AG04450 (cell line): ENCODE measurements at regions of chr14 and their contacts with region 1.

Region 1: DNA sequence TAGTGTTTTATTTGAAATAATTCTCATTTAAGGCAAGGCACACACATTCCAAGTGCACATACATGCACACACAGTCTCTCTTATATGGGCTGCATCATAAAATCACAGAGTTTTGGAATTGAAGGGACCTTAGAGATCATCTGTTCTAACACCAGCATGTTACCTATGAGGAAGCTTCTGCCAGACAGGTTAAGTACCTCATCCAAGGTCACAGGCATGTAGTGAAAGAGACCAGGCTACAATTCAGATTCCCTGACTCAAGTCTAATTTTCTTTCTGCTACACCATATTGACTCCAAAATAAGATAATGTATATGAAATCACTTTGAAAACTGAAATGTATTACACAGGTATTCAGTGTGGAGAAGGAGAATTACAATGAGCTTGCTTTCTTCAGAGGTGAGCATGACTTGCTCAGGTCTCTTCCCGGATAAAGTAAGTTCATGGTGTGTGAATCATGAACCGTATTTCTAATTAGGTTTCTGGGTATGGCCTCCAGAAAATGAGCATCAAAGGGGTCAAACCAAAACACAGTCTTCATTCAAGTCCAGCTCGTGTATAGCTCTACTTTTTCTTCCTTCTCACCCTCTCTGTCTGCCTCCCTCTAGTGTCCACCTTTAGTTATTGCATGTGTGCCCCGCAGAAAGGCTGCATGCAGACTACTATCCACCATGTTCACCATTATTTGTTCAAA is 411.9 kb downstream of the FUT8 start:
- DNase-seq: peak; percentile 41
- H3K4me3 ChIP-seq: no peak overlapping the region
- H3K27ac ChIP-seq: no peak overlapping the region
- H3K27me3 ChIP-seq: peaks cover 21% of the 10 kb centered on the region
- CTCF ChIP-seq: peak; percentile 97

Region 2: GRCh38 chr14:65164068-65164824 is 660.2 kb before region 1 on chr14:
- CTCF ChIA-PET with region 1: interaction called, 129 read pairs
- POLR2A ChIA-PET with region 1: no interaction called
- DNase-seq: no peak
- H3K4me3 ChIP-seq: no peak overlapping the region
- H3K27ac ChIP-seq: no peak overlapping the region
- H3K27me3 ChIP-seq: no peaks in the 10 kb centered on the region
- CTCF ChIP-seq: peak; percentile 71

Region 3: DNA sequence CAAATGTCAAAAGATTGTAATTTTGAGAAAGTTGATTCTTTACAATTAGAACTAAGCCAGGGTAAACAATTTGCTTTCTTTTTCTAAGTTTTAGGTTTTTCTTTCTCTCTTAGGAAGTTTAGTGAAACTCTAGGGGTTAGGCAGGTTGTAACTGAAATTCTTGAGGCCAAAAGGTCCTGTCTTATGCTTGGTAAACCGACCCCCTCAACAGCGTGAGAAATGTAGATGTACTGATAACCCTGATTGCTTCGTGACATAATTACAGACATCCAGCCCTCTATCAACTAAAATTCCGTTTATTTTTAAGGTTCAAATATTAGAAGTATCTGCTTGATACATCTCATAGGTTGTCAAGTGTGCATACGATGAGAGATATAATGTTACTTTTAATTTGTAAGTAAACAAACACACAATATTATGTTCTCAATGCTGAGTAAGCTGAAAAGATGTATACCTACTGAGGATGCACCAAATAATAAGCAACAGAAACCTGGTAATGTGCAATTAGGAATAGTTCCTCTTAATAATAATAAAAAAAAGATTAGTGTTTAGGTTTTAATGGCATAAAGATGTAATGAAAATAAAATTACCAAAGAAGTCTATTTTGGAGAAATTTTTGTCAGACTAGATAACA is 404.7 kb before region 1 on chr14:
- CTCF ChIA-PET with region 1: interaction called, 359 read pairs
- POLR2A ChIA-PET with region 1: no interaction called
- DNase-seq: no peak
- H3K4me3 ChIP-seq: no peak overlapping the region
- H3K27ac ChIP-seq: no peak overlapping the region
- H3K27me3 ChIP-seq: no peaks in the 10 kb centered on the region
- CTCF ChIP-seq: no peak

Region 4: GRCh38 chr14:65810322-65810721 is 14.1 kb before region 1 on chr14:
- CTCF ChIA-PET with region 1: interaction called, 10 read pairs
- POLR2A ChIA-PET with region 1: no interaction called
- DNase-seq: no peak
- H3K4me3 ChIP-seq: no peak overlapping the region
- H3K27ac ChIP-seq: no peak overlapping the region
- H3K27me3 ChIP-seq: peaks cover 4% of the 10 kb centered on the region
- CTCF ChIP-seq: no peak

Region 5: DNA sequence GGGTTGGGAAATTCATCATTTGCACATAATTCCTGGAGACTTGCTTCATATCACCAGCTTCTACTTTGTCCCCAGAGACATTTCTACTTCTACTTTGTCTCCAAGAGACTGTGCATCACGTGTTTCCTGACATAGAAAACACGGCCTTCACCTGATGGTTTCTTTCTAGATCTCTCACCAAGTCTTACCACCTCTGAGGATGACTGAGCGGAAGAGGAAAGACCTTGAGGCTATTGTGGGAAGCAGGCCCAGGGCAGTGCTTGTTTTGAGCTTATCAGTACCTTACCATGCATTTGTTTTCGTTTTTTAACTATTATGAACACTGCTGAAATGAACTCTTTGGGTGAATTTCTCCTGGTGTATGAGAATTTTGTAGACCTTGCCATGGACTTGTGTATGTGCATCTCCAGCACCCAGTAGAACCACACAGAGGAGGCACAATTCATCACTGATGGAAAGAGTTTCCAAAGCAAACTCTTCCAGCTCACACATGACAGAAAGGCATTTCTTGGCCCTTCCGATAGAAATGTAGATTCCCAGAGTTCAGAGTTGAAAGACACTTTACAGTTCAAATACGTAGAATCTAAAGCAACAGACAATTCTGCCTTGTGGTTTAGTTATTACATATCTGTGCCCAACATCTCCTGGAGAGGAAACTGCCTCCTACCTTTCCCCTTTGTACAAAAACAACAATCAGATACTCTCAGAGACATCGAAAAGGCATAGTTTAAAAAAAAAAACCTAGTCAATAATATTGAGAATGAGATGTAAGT is 22.8 kb after region 1 on chr14:
- CTCF ChIA-PET with region 1: interaction called, 16 read pairs
- POLR2A ChIA-PET with region 1: no interaction called
- DNase-seq: no peak
- H3K4me3 ChIP-seq: no peak overlapping the region
- H3K27ac ChIP-seq: no peak overlapping the region
- H3K27me3 ChIP-seq: no peaks in the 10 kb centered on the region
- CTCF ChIP-seq: no peak

Region 6: DNA sequence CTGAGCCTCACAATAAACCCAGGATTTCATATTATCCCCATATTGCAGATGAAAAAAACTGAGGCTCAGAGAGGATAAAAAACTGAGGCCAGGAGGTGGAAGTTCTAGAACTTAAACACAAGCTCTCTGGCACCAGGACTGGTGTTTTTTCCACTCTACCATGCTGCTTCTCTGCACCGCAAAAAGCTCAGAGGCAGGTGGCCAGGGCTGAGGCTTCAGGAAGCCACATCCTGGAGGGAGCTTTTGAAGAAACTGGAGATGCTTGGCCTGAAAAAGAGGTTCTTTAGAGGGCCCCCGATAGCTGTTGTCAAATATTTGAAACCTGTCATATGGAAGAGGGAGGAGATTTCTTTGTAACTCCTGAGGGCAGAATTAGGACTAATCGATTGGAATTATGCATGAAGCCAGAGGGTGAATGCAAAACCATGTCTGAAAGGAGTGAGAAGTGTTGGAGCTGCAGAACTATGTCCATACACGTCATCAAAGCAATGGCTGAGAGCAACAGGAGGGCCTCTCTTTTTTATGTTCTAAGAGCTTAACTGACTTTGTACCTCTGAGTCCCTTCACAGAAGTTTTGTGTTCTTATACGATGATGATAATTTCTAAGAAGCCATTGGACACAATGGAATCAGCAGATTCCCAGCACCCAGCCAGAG is 36.7 kb after region 1 on chr14:
- CTCF ChIA-PET with region 1: no interaction called
- POLR2A ChIA-PET with region 1: no interaction called
- DNase-seq: no peak
- H3K4me3 ChIP-seq: no peak overlapping the region
- H3K27ac ChIP-seq: no peak overlapping the region
- H3K27me3 ChIP-seq: no peaks in the 10 kb centered on the region
- CTCF ChIP-seq: no peak

Region 7: GRCh38 chr14:65910108-65910786 is 85.8 kb after region 1 on chr14:
- CTCF ChIA-PET with region 1: no interaction called
- POLR2A ChIA-PET with region 1: no interaction called
- DNase-seq: no peak
- H3K4me3 ChIP-seq: no peak overlapping the region
- H3K27ac ChIP-seq: no peak overlapping the region
- H3K27me3 ChIP-seq: no peaks in the 10 kb centered on the region
- CTCF ChIP-seq: no peak